Calu3 (cell line): ENCODE measurements at regions of chr1 and their contacts with region 1.

Region 1: DNA sequence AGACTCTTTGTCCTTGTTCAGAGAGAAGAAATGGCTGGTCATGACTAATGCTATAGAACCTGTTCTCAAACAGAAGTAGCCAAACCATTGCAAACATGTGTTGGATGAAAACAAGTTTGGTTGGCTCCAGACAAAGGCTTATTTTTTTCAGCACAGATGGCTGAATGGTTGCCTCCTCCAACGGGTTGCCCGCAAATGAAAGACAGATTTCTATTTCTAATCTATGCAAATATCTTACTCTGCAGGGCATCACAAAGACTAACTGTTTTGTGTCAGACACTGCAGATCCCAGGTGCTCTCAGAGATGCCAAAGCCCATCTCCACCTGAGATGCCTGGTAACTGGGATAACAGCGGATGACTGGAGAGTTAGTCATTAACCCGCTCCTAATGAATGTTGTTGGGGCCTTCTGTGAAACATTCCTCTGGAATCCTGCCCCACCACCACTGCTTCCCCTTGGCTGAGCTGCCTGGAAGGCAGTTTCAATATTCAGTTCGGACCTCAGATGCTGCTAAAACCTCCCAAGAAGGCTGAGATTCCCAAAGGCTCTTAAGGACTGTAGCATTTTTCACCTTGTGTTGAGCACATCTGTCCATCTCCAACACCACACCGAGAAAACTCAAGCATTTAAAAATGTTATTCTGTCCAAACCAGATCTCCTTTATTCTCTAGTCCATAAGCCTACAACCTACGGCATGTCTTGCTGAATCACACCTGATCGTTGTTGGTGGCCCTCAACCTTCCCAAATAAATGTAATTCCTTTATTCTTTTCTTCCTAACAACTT is 104.4 kb downstream of the PTPN14 start:
- DNase-seq: peak; percentile 88
- H3K4me3 Mint-ChIP-seq: peak overlapping the region; percentile 47
- H3K27ac Mint-ChIP-seq: peak overlapping the region; percentile 85
- H3K4me1 Mint-ChIP-seq: peaks cover 76% of the 10 kb centered on the region
- H3K27me3 Mint-ChIP-seq: no peaks in the 10 kb centered on the region
- CTCF ChIP-seq: no peak

Region 2: DNA sequence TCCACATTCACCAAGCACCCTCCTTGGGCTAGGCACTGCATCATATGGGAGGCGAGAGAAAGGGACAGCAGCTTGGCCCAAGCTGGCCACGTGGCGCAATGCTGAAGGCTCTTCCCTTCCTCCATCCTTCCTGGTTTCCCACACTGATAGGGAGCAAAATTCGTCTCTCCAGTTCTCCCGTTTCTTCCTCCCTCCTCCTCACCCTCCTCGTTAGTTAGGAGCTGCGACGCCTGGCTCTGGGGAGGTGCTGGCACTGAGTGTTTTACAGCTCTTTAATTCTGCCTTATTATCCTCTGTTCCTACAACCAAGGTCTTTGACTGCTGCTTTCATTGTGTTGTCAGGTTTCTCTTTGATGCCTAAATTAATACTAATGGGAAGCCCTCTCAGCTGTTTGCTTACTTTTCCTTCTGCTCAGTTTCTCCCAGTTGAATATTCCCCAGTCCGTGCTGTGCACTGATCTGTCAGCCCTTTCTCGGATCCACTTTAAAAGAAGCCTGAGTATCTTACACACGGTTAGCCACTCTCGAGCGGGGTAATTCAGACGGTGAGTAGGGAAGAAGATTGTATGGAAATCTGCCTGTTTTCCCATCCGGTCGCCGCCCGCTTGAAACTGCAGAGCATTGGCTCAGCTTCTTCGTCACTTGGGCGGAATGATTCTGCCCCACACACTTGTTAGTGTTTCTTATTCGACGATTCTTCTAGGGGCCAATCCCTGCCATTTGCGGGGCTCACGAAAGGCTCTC is 222.2 kb before region 1 on chr1:
- CTCF ChIA-PET with region 1: no interaction called
- intact Hi-C with region 1: no loop called
- DNase-seq: peak; percentile 11
- H3K4me3 Mint-ChIP-seq: peak overlapping the region; percentile 50
- H3K27ac Mint-ChIP-seq: no peak overlapping the region
- H3K4me1 Mint-ChIP-seq: peaks cover 17% of the 10 kb centered on the region
- H3K27me3 Mint-ChIP-seq: peaks cover 42% of the 10 kb centered on the region
- CTCF ChIP-seq: no peak

Region 3: DNA sequence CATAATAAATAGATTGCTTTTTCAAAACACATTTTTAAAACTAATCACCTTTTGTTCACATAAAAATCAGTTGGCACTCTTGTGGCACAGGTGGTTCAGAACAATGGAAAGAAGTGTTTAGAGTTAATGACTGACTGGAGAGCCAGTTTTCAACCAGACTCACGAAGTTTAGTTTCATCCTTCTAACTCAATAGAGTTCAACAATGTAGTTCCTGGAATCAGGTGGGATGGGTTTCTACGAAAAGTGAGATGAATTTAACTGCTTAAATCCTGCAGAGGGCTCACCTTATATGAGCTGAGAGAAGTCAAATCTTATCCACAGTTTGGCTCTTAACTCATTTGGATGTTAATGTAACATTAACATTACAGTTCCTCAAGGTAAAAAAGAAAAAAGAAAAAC is 49.5 kb before region 1 on chr1:
- CTCF ChIA-PET with region 1: no interaction called
- intact Hi-C with region 1: loop called (anchors 5 kb)
- DNase-seq: no peak
- H3K4me3 Mint-ChIP-seq: no peak overlapping the region
- H3K27ac Mint-ChIP-seq: no peak overlapping the region
- H3K4me1 Mint-ChIP-seq: peaks cover 14% of the 10 kb centered on the region
- H3K27me3 Mint-ChIP-seq: no peaks in the 10 kb centered on the region
- CTCF ChIP-seq: no peak

Region 4: DNA sequence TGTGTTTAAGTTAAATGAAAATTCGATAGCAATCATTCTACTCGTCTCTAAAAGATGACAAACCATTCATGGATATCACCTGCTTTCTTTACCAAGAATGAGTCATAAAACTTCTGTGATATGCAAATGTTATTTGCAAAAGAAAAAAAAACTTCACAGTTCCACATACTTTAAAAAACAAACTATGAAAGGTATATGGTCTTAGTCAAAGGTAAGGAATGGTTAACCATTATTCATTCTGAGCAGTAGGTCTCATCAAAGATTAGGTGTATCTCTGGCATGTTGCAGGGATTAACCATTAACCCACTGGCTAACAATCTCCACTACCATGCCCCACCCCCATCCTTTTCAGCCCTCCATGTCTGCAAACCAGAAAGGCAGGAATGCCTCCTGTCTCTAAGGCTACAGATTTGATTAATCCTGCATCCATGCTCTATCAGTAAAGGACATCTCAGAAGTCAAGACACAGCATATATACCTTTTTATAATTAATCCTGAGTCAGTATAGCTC is 60.1 kb after region 1 on chr1:
- CTCF ChIA-PET with region 1: no interaction called
- intact Hi-C with region 1: loop called (anchors 2 kb)
- DNase-seq: peak; percentile 93
- H3K4me3 Mint-ChIP-seq: peak overlapping the region; percentile 39
- H3K27ac Mint-ChIP-seq: peak overlapping the region; percentile 83
- H3K4me1 Mint-ChIP-seq: peaks cover 58% of the 10 kb centered on the region
- H3K27me3 Mint-ChIP-seq: no peaks in the 10 kb centered on the region
- CTCF ChIP-seq: no peak